Adrenal gland (tissue), 19 donors: ENCODE measurements at regions of chr9 and their contacts with region 1.

Region 1: GRCh38 chr9:127904561-127905003 is 5.2 kb upstream of the ST6GALNAC6 start:
- DNase-seq: peak in 1 of 7 donors; percentile 47
- H3K4me3 ChIP-seq: no peak overlapping the region
- H3K27ac ChIP-seq: peak overlapping the region in 4 of 5 donors; percentile 14 to 88 (median 50)
- H3K4me1 ChIP-seq: peaks cover 13 to 50% of the 10 kb centered on the region in 2 donors
- H3K27me3 ChIP-seq: no peaks in the 10 kb centered on the region
- CTCF ChIP-seq: no peak
- POLR2A ChIP-seq: no peak

Region 2: DNA sequence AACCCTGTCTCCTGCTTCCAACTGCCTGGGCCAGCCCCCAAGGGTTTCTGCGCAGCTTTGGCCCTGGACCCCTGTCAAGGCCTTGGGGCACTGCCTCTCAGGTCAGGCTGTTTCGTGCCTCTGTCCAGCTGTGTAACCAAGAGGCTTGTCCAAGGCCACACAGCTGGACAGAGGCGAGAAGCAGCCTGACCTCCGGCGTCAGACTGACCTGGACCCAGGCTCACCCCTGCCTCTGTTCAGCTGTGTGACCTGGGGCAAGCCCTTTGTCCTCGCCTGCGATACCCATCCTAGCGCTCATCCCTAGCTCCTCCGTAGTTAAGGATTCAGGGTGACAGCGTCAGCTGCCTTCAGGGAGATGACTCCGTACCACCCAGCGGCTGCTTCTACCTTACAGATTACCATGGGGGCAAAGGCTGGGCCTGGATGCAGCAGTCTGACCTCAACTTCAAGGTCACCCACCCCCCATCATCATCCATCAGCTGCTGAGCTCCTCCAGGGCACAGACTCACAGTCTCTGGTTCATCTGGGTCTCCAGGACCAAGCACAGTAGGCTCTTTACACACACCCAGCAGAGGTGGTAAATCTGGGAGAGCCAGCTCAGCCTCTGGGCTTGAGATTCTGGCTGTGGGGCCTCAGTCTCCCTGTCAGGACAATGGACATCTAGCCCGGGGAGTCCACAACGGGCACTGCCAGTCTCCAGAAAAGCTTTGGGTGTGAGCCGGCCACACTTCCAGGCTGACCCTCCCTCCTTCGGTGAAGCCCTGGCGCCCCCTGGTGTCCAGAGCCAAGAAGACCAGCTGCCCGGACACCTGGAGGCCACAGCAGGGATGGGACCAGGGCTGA is 35.1 kb before region 1 on chr9:
- intact Hi-C with region 1: loop called in 1 of 2 experiments (anchors 5 kb)
- DNase-seq: peak; percentile 88 to 94 (median 90)
- H3K4me3 ChIP-seq: no peak overlapping the region
- H3K27ac ChIP-seq: peak overlapping the region in 1 of 5 donors; percentile 54
- H3K4me1 ChIP-seq: peaks cover 7 to 11% of the 10 kb centered on the region in 2 donors
- H3K27me3 ChIP-seq: no peaks in the 10 kb centered on the region
- CTCF ChIP-seq: peak; percentile 71 to 98 (median 93)
- POLR2A ChIP-seq: no peak